Cardiac septum (tissue), 1 donor: ENCODE measurements at regions of chr18 and their contacts with region 1.

Region 1: DNA sequence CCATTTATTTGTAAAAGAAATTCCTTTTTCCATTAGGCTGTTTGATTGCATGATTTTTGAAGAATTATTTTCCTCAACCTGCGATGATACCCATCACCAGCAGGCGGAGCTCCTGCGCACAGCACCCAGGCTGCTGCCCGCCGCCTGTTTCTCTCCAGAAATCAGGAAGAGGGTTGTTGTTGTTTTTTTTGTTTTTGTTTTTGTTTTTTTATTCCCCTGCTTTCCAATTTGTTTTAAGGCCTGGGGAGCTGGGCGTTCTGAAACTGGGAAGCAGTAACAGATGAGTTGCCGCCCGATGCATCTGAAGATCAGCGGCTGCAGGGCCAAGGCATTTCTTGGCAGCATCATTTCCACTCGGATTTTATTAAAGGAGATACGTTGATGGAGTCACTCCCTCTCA is 132.1 kb downstream of the MBP start:
- DNase-seq: no peak

Region 2: DNA sequence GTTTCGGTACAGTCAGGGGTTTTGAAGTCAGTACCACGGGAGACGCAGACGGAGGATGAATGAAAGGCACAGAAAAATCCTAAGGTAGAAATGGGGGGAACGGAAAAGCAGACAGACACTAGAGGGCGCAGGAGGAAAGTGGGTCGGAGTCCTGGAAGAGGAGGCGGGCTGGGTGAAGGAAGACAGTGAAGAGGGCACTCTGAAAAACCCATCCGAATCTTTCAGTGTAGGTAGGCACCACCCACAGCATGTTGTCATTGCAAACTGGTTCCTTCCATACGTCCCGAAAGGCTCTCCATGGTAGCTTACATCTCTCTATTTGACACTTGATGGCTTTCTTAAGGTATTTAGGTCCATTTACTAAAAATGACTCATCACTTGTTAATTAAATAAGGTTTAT is 196.7 kb before region 1 on chr18:
- intact Hi-C with region 1: no loop called
- DNase-seq: no peak

Region 3: DNA sequence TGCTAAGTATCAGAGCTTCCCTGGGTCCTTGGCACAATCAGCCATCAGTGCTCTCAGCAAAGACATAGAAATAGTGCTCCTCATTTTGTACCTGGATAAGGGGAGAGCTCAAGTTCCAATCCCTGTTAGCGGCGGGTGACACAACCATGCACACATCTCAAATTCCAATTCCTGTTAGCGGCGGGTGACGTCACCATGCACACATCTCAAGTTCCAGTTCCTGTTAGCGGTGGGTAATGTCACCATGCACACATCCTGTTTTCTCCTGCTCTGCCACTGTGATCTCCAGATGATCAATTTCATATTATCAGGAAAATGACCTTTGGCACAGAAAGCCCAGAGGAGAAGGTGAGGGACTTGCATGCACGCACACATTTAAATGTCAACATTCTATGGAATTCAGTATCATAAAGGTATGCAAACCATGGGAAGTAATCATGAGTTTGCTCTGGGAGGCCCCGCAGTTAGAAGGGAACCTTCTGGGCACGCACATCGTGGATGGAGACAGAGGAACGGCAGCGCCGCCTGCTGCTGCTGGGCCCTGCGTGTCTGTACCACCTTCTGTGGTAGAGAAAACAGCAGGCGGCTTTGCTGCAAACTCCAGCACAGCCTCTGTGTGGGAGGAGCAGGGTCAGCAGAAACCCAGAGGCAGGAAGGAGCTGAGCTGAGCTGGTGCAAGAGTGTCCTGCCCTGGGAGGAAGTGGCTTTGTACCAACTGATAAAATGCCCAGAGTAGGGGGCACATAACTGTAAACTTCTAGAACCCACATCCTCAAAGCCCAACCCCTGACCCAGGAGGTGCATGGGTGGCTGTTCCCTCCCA is 54.3 kb after region 1 on chr18:
- intact Hi-C with region 1: loop called (anchors 1 kb)
- DNase-seq: peak; percentile 92

Region 4: GRCh38 chr18:77207540-77207939 is 207.0 kb after region 1 on chr18:
- intact Hi-C with region 1: loop called (anchors 2 kb)
- DNase-seq: no peak

Region 5: GRCh38 chr18:78046631-78047030 is 1046.1 kb after region 1 on chr18:
- intact Hi-C with region 1: no loop called
- DNase-seq: no peak